SK-N-SH (cell line): ENCODE measurements at regions of chr2 and their contacts with region 1.

Region 1: GRCh38 chr2:20661067-20661980 is 5.6 kb upstream of the GDF7 start:
- DNase-seq: peak; percentile 88
- H3K4me3 ChIP-seq: peak overlapping the region in 1 of 2 experiments; percentile 5; a peak in 1 of 4 replicates
- H3K27ac ChIP-seq: no peak overlapping the region
- H3K4me1 ChIP-seq: peaks cover 0 to 10% of the 10 kb centered on the region in 2 experiments; a peak in 2 of 4 replicates
- H3K27me3 ChIP-seq: peaks cover 71% of the 10 kb centered on the region
- CTCF ChIP-seq: peak; percentile 99
- EP300 ChIP-seq: 0 out of 4 replicates have a peak, but pooled peaks of 1 of the 2 experiments have one; percentile 23
- RAD21 ChIP-seq: peak; percentile 99

Region 2: GRCh38 chr2:20496081-20496876 is 165.0 kb before region 1 on chr2:
- CTCF ChIA-PET with region 1: no interaction called
- POLR2A ChIA-PET with region 1: no interaction called
- DNase-seq: no peak
- H3K4me3 ChIP-seq: no peak overlapping the region
- H3K27ac ChIP-seq: no peak overlapping the region
- H3K4me1 ChIP-seq: peaks cover 19 to 25% of the 10 kb centered on the region in 2 experiments
- H3K27me3 ChIP-seq: no peaks in the 10 kb centered on the region
- CTCF ChIP-seq: no peak
- EP300 ChIP-seq: no peak
- RAD21 ChIP-seq: no peak

Region 3: GRCh38 chr2:20650880-20651730 is 10.2 kb before region 1 on chr2 and contains the start of gene HS1BP3:
- CTCF ChIA-PET with region 1: interaction called, 137 read pairs
- POLR2A ChIA-PET with region 1: interaction called, 5 read pairs
- DNase-seq: peak; percentile 100
- H3K4me3 ChIP-seq: peak within 1 kb of the TSS; percentile 76 to 93
- H3K27ac ChIP-seq: peak within 1 kb of the TSS; percentile 48 to 91
- H3K4me1 ChIP-seq: peaks cover 13 to 18% of the 10 kb centered on the region in 2 experiments; a peak in 2 of 4 replicates
- H3K27me3 ChIP-seq: peaks cover 9% of the 10 kb centered on the region; the same call in 1 of the 2 replicates
- CTCF ChIP-seq: peak; percentile 66
- EP300 ChIP-seq: 0 out of 4 replicates have a peak, but pooled peaks of 1 of the 2 experiments have one; percentile 23
- RAD21 ChIP-seq: peak; percentile 59
- polyA plus RNA-seq, gene HS1BP3: 18.7 and 20.1 TPM in 2 replicates

Region 4: DNA sequence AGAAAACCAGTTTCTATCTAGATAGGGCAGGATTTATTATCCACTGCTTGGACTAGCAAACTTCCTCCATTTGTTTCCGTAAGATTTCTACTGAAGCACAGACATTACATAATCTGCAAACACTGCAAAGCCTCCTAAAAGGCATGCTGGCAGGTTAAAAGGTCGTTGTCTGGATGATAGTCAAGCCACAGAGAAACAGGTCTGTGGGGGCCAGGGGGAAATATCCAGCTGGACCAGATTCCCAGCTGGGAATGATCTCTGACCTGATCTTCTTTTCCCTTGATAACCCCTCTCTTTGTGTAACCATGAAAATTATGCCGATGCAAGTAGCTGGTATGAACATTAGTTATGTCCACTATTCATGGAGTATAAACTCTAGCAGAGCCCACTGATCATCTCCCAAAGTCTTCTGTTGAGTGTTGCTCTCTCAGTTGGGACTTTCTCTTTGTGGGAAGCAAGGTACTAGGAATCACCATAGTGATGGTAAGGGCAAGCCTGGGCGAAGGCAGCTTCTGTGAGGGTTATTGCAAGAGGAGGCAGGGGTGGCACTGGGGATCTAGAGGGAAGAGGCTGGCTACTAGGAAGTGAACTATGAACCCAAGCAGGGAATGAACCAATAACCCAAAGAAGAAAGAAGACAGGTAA is 66.9 kb after region 1 on chr2:
- CTCF ChIA-PET with region 1: interaction called, 10 read pairs
- POLR2A ChIA-PET with region 1: no interaction called
- DNase-seq: no peak
- H3K4me3 ChIP-seq: no peak overlapping the region
- H3K27ac ChIP-seq: peak overlapping the region; percentile 9 to 47; a peak in 2 of 4 replicates
- H3K4me1 ChIP-seq: peaks cover 5 to 9% of the 10 kb centered on the region in 2 experiments; a peak in 3 of 4 replicates
- H3K27me3 ChIP-seq: no peaks in the 10 kb centered on the region
- CTCF ChIP-seq: no peak
- EP300 ChIP-seq: no peak
- RAD21 ChIP-seq: no peak

Region 5: GRCh38 chr2:20900052-20900636 is 238.8 kb after region 1 on chr2:
- CTCF ChIA-PET with region 1: interaction called, 11 read pairs
- POLR2A ChIA-PET with region 1: no interaction called
- DNase-seq: peak; percentile 64
- H3K4me3 ChIP-seq: no peak overlapping the region
- H3K27ac ChIP-seq: peak overlapping the region in 1 of 2 experiments; percentile 87; a peak in 2 of 4 replicates
- H3K4me1 ChIP-seq: peaks cover 0 to 14% of the 10 kb centered on the region in 2 experiments; a peak in 2 of 4 replicates
- H3K27me3 ChIP-seq: peaks cover 17% of the 10 kb centered on the region
- CTCF ChIP-seq: no peak
- EP300 ChIP-seq: peak in 1 of 2 experiments; percentile 85; a peak in 2 of 4 replicates
- RAD21 ChIP-seq: peak; percentile 45; the same call in 1 of the 2 replicates

Region 6: GRCh38 chr2:20962939-20963557 is 301.7 kb after region 1 on chr2:
- CTCF ChIA-PET with region 1: interaction called, 427 read pairs
- POLR2A ChIA-PET with region 1: no interaction called
- DNase-seq: peak; percentile 84
- H3K4me3 ChIP-seq: no peak overlapping the region; a peak in 1 of 4 replicates
- H3K27ac ChIP-seq: no peak overlapping the region
- H3K4me1 ChIP-seq: no peaks in the 10 kb centered on the region; a peak in 1 of 4 replicates
- H3K27me3 ChIP-seq: peaks cover 14% of the 10 kb centered on the region; the same call in 1 of the 2 replicates
- CTCF ChIP-seq: peak; percentile 98
- EP300 ChIP-seq: no peak
- RAD21 ChIP-seq: peak; percentile 97

Region 7: DNA sequence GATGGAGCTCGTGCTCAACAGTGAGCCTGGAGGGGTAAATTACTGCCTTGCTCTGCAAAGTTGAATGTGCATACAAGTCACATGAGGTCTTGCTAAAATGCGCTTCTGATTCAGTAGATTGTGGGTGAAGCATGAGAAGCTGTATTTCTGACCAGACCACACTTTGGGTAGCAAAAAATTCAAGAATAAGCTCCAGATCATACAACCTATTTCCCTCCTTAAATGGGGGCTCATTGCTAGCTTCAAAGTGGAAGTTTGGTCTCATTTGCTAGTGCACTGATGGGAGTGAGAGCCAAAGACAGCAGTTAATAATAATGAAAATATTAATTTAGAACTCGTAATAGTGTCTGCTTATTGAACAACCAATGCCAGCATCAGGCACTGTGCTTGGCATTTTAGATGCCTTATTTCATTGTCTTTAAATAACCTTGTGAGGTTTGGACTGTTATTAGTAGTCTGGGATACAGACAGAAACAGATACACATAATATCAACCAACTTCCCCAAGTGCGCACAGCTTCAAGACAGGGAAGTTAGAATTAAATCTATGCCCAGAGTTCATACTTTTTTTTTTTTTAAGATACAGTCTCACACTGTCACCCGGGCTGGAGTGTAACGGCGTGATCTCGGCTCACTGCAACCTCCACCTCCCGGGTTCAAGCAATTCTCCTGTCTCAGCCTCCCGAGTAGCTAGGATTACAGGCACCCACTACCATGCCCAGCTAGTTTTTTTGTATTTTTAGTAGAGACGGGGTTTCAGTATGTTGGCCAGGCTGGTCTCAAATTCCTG is 364.6 kb after region 1 on chr2:
- CTCF ChIA-PET with region 1: interaction called, 38 read pairs
- POLR2A ChIA-PET with region 1: no interaction called
- DNase-seq: no peak
- H3K4me3 ChIP-seq: no peak overlapping the region
- H3K27ac ChIP-seq: no peak overlapping the region
- H3K4me1 ChIP-seq: no peaks in the 10 kb centered on the region
- H3K27me3 ChIP-seq: no peaks in the 10 kb centered on the region; the same call in 1 of the 2 replicates
- CTCF ChIP-seq: no peak
- EP300 ChIP-seq: no peak
- RAD21 ChIP-seq: no peak